ENCODE measurements at regions of chrX and their contacts with region 1.

Region 1: DNA sequence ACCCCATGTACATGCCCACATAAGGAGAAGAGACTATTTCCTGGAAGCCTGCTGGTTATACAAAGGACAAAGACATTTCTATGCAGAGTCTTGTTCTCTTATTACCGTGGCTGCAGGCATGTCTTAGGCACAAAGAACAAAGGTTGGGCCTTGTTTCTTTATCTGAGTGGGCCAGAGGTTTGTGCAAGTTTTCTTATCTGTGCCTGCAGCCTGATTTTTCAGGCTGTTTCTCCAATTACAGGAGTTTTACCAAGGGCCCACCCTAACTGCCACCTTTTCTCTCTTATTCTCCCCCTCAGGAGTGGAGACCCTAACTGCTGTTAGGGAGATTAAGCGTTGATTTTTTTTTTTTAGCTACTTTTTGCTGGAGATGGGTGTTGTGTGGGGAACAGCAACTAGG is 3.5 kb downstream of the TENT5D start:
- DNase-seq: no peak
- H3K4me3 ChIP-seq: no peak overlapping the region
- H3K27ac ChIP-seq: no peak overlapping the region
- H3K4me1 ChIP-seq: no peaks in the 10 kb centered on the region
- H3K27me3 ChIP-seq: no peaks in the 10 kb centered on the region

Region 2: DNA sequence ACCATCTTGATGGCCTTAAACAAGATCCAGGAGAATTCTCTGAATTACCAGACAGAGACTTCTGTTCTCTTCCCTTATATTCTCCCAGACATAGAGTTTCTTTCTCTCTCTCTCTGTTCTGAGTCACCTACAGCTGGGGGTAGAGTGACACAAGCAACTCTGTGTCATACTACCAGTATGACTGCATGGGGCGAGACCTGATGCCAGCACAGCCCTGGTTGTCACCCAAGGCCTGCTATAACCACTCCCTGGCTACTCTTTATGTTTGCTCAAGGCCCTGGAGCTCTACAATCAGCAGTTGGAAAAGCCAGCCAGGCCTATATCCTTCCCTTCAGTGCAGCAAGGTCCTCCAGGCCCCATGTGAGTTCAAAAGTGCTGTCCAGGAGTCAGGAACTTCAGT is 117.7 kb before region 1 on chrX:
- in situ Hi-C with region 1: loop called (anchors 25 kb)
- DNase-seq: no peak
- H3K4me3 ChIP-seq: no peak overlapping the region
- H3K27ac ChIP-seq: no peak overlapping the region
- H3K4me1 ChIP-seq: no peaks in the 10 kb centered on the region
- H3K27me3 ChIP-seq: no peaks in the 10 kb centered on the region

Measured in GM23248 (cell line).